ENCODE measurements at regions of chr12 and their contacts with region 1.

Region 1: DNA sequence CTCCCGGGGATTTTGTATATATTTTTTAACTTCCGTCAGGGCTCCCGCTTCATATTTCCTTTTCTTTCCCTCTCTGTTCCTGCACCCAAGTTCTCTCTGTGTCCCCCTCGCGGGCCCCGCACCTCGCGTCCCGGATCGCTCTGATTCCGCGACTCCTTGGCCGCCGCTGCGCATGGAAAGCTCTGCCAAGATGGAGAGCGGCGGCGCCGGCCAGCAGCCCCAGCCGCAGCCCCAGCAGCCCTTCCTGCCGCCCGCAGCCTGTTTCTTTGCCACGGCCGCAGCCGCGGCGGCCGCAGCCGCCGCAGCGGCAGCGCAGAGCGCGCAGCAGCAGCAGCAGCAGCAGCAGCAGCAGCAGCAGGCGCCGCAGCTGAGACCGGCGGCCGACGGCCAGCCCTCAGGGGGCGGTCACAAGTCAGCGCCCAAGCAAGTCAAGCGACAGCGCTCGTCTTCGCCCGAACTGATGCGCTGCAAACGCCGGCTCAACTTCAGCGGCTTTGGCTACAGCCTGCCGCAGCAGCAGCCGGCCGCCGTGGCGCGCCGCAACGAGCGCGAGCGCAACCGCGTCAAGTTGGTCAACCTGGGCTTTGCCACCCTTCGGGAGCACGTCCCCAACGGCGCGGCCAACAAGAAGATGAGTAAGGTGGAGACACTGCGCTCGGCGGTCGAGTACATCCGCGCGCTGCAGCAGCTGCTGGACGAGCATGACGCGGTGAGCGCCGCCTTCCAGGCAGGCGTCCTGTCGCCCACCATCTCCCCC is 777 bp downstream of the ASCL1 start:
- DNase-seq: peak in 1 of 9 donors; percentile 32
- ATAC-seq: no peak
- H3K4me3 ChIP-seq: no peak overlapping the region
- H3K4me3 Mint-ChIP-seq: peak overlapping the region in 9 of 10 donors; percentile 62 to 86 (median 66)
- H3K27ac ChIP-seq: no peak overlapping the region
- H3K27ac Mint-ChIP-seq: peak overlapping the region in 1 of 9 donors; percentile 49
- H3K4me1 ChIP-seq: peaks cover 0 to 3% of the 10 kb centered on the region in 2 donors
- H3K4me1 Mint-ChIP-seq: peaks cover 5 to 52% (median 30%) of the 10 kb centered on the region in 7 donors
- H3K27me3 ChIP-seq: peaks cover 7 to 23% of the 10 kb centered on the region in 2 donors
- H3K27me3 Mint-ChIP-seq: peaks cover 83 to 92% (median 91%) of the 10 kb centered on the region in 5 donors

Region 2: DNA sequence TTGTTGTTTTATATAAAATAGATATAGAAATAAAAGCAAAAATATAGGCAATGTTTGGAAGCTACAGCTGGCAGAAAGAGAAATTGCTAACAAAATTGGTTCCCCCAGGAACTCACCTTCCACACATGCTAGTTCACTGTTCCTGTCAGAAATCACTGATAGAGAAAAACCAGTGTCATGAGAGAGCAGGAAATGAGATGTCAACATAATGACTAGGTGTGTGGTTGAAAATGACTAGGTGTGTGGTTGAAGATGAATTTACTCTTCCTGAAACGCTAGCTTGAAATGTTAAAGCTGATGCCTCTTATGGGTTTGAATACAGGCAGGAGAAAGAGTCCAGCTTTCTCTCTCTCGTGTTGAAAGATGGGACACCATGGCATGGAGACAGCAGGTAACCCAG is 321.2 kb after region 1 on chr12:
- CTCF ChIA-PET with region 1: no interaction called
- POLR2A ChIA-PET with region 1: no interaction called
- intact Hi-C with region 1: loop called in 1 of 2 experiments (anchors 10 kb)
- DNase-seq: peak in 3 of 9 donors; percentile 1 to 26 (median 10)
- ATAC-seq: no peak
- H3K4me3 ChIP-seq: no peak overlapping the region
- H3K4me3 Mint-ChIP-seq: peak overlapping the region in 1 of 10 donors; percentile 44
- H3K27ac ChIP-seq: no peak overlapping the region
- H3K27ac Mint-ChIP-seq: peak overlapping the region in 2 of 9 donors; percentile 3 to 67
- H3K4me1 ChIP-seq: no peaks in the 10 kb centered on the region
- H3K4me1 Mint-ChIP-seq: peaks cover 0 to 22% (median 5%) of the 10 kb centered on the region in 7 donors
- H3K27me3 ChIP-seq: no peaks in the 10 kb centered on the region
- H3K27me3 Mint-ChIP-seq: peaks cover 0 to 11% (median 0%) of the 10 kb centered on the region in 5 donors

Region 3: GRCh38 chr12:103441437-103442181 is 483.4 kb after region 1 on chr12:
- CTCF ChIA-PET with region 1: no interaction called
- POLR2A ChIA-PET with region 1: no interaction called
- intact Hi-C with region 1: loop called in 1 of 2 experiments (anchors 5 kb)
- DNase-seq: peak in 8 of 9 donors; percentile 19 to 76 (median 58)
- ATAC-seq: peak; percentile 97
- H3K4me3 ChIP-seq: peak overlapping the region; percentile 26
- H3K4me3 Mint-ChIP-seq: peak overlapping the region; percentile 72 to 97 (median 91)
- H3K27ac ChIP-seq: peak overlapping the region; percentile 55
- H3K27ac Mint-ChIP-seq: peak overlapping the region; percentile 90 to 100 (median 97)
- H3K4me1 ChIP-seq: peaks cover 11 to 20% of the 10 kb centered on the region in 2 donors
- H3K4me1 Mint-ChIP-seq: peaks cover 0 to 33% (median 24%) of the 10 kb centered on the region in 7 donors
- H3K27me3 ChIP-seq: no peaks in the 10 kb centered on the region
- H3K27me3 Mint-ChIP-seq: no peaks in the 10 kb centered on the region